ENCODE measurements at regions of chr20 and their contacts with region 1.

Region 1: GRCh38 chr20:50380641-50381040 is 129.5 kb upstream of the PTPN1 start:
- DNase-seq: no peak
- H3K4me3 ChIP-seq: no peak overlapping the region
- CTCF ChIP-seq: peak; percentile 63

Region 2: GRCh38 chr20:50320910-50321796 is 59.5 kb before region 1 on chr20:
- in situ Hi-C with region 1: loop called (anchors 5 kb)
- DNase-seq: peak; percentile 91
- H3K4me3 ChIP-seq: peak overlapping the region; percentile 34
- CTCF ChIP-seq: no peak

Measured in astrocyte of the cerebellum (primary cell).